ENCODE measurements at regions of chr1 and their contacts with region 1.

Region 1: DNA sequence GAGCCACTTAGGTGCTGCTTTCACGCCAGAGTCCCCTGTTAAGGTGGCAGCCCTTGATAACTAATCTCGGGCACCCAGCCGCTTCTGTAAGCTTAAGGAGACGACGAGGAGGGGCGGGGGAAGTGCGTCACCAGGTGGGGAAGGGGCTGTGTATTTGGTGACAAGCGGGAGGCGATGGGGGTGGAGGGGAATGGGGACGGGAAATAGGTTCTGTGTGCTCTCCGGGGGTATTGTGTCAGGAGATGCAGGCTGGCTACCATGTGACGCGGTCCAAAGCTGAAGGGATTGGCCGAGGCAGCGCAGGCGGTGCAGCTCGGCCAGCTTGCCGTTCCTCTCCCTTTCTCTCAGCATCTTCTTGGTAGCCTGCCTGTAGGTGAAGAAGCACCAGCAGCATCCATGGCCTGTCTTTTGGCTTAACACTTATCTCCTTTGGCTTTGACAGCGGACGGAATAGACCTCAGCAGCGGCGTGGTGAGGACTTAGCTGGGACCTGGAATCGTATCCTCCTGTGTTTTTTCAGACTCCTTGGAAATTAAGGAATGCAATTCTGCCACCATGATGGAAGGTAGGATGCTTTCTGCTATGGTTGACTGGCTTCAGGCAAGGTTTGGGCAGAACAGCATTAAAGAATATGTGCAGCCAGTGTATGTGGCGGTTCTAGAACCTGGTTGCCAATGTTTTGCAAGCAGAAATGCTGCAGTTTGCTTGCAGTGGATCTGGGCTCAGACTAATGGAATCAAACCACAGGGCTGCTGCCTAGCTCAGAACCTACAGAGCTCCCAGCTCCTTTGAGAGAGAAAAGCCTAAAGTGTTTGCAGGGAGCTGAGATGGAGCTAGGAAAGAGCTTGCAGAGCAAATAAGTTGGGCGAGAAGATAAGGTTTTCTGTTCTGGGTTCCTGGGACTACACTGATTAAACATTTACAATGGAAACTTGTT is at the start of gene SGIP1:
- DNase-seq: peak; percentile 73 to 94 (median 88)
- H3K4me3 ChIP-seq: peak within 1 kb of the TSS; percentile 42 to 90 (median 72)
- H3K27ac ChIP-seq: peak within 1 kb of the TSS; percentile 44 to 96 (median 92)
- H3K27me3 ChIP-seq: no peaks in the 10 kb centered on the region
- CTCF ChIP-seq: peak in 5 of 56 donors; percentile 7 to 20 (median 14)
- total RNA-seq, gene SGIP1: 106 to 187 (median 149) TPM

Region 2: GRCh38 chr1:66350001-66350547 is 184.0 kb before region 1 on chr1:
- intact Hi-C with region 1: loop called in 1 of 2 experiments (anchors 10 kb)
- DNase-seq: peak in 1 of 10 donors; percentile 53
- H3K4me3 ChIP-seq: peak overlapping the region in 37 of 59 donors; percentile 2 to 45 (median 13)
- H3K27ac ChIP-seq: peak overlapping the region; percentile 39 to 94 (median 83)
- H3K27me3 ChIP-seq: no peaks in the 10 kb centered on the region
- CTCF ChIP-seq: peak in 1 of 56 donors; percentile 13

Region 3: DNA sequence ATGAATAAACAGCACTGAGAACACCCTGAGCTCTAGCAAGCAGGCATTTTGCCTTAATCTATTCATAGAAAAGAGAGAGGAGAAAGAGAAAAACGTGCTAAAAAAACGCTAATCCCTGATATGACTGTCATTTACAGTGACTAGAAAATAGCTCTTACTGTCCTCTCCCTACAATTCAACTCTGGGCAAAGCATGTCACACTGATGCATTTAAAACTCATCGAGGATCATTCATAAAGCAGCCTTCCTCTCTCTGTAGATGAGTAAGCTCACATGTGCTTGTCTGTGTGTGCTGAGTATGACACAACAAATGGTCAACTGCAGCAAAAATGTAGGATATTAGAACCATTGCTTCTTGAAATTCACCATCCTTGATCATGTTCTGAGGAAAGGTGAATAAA is 108.9 kb after region 1 on chr1:
- intact Hi-C with region 1: loop called (anchors 2 to 5 kb)
- DNase-seq: no peak
- H3K4me3 ChIP-seq: no peak overlapping the region
- H3K27ac ChIP-seq: peak overlapping the region in 12 of 59 donors; percentile 8 to 68 (median 32)
- H3K27me3 ChIP-seq: no peaks in the 10 kb centered on the region
- CTCF ChIP-seq: no peak

Measured in dorsolateral prefrontal cortex (tissue), 120 donors.